B cell (primary cell): ENCODE measurements at regions of chr22 and their contacts with region 1.

Region 1: DNA sequence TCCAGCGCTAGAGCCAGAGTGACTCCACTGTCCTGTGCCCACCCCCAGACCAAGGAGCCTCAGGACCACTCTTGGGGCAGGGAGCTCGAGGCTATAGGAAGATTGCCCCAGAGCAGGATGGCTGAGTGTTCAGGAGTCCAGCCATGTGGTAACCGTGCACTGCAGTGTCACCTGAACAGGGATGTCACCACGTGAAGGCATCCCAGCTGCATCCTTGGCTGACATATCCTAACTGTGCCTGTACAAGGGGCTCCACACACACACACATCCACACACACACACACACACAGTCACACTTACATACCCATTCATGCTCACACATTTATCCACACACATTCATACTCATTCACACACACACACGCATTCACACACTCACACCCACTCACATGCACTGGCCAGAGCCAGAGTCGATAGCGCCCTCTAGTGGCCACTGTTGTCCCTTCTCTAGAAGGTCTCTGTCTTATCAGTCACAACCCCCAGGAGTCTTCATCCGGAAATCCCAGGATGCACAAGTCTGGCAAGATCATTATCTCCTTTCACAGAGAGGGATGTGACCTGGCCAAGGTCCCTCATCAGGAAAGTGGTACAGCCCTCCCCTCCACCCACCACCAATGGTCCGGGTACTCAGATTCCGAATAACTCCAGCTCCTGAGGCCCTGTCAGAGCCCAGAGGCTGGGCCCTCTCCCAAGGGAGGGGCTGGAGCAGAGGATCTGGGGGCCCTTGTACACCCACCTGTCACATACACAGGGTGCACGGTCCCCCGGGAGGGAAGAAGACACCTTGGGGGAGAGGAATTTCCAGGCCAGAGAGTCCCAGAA is 55.1 kb downstream of the IGLL5 start:
- DNase-seq: peak; percentile 89
- ATAC-seq: peak; percentile 66
- H3K4me3 ChIP-seq: peak overlapping the region in 1 of 5 experiments; percentile 5
- H3K4me3 Mint-ChIP-seq: peak overlapping the region; percentile 51
- H3K27ac ChIP-seq: peak overlapping the region; percentile 66 to 79
- H3K27ac Mint-ChIP-seq: peak overlapping the region; percentile 83
- H3K4me1 ChIP-seq: peaks cover 92 to 96% of the 10 kb centered on the region in 2 donors
- H3K4me1 Mint-ChIP-seq: peaks cover 86% of the 10 kb centered on the region
- H3K27me3 ChIP-seq: no peaks in the 10 kb centered on the region
- H3K27me3 Mint-ChIP-seq: no peaks in the 10 kb centered on the region
- CTCF ChIP-seq: peak; percentile 83

Region 2: GRCh38 chr22:22710719-22711531 is 231.8 kb before region 1 on chr22:
- CTCF ChIA-PET with region 1: interaction called, 11 read pairs
- POLR2A ChIA-PET with region 1: no interaction called
- intact Hi-C with region 1: no loop called
- DNase-seq: peak; percentile 80
- ATAC-seq: peak; percentile 48
- H3K4me3 ChIP-seq: no peak overlapping the region
- H3K4me3 Mint-ChIP-seq: peak overlapping the region; percentile 23
- H3K27ac ChIP-seq: no peak overlapping the region
- H3K27ac Mint-ChIP-seq: peak overlapping the region; percentile 76
- H3K4me1 ChIP-seq: peaks cover 30 to 53% of the 10 kb centered on the region in 2 donors
- H3K4me1 Mint-ChIP-seq: peaks cover 52% of the 10 kb centered on the region
- H3K27me3 ChIP-seq: peaks cover 0 to 2% (median 0%) of the 10 kb centered on the region in 4 experiments
- H3K27me3 Mint-ChIP-seq: peaks cover 3% of the 10 kb centered on the region
- CTCF ChIP-seq: peak; percentile 89

Region 3: GRCh38 chr22:22810018-22810427 is 132.7 kb before region 1 on chr22:
- CTCF ChIA-PET with region 1: interaction called, 23 read pairs
- POLR2A ChIA-PET with region 1: no interaction called
- intact Hi-C with region 1: no loop called
- DNase-seq: peak; percentile 84
- ATAC-seq: peak; percentile 76
- H3K4me3 ChIP-seq: peak overlapping the region in 1 of 5 experiments; percentile 1
- H3K4me3 Mint-ChIP-seq: no peak overlapping the region
- H3K27ac ChIP-seq: no peak overlapping the region
- H3K27ac Mint-ChIP-seq: no peak overlapping the region
- H3K4me1 ChIP-seq: peaks cover 9 to 26% of the 10 kb centered on the region in 2 donors
- H3K4me1 Mint-ChIP-seq: peaks cover 24% of the 10 kb centered on the region
- H3K27me3 ChIP-seq: peaks cover 0 to 9% (median 0%) of the 10 kb centered on the region in 4 experiments
- H3K27me3 Mint-ChIP-seq: peaks cover 12% of the 10 kb centered on the region
- CTCF ChIP-seq: peak; percentile 91

Region 4: GRCh38 chr22:22855617-22856308 is 87.0 kb before region 1 on chr22:
- CTCF ChIA-PET with region 1: interaction called, 91 read pairs
- POLR2A ChIA-PET with region 1: interaction called, 3 read pairs
- intact Hi-C with region 1: no loop called
- DNase-seq: peak; percentile 72
- ATAC-seq: peak; percentile 74
- H3K4me3 ChIP-seq: no peak overlapping the region
- H3K4me3 Mint-ChIP-seq: peak overlapping the region; percentile 47
- H3K27ac ChIP-seq: no peak overlapping the region
- H3K27ac Mint-ChIP-seq: peak overlapping the region; percentile 71
- H3K4me1 ChIP-seq: peaks cover 35 to 39% of the 10 kb centered on the region in 2 donors
- H3K4me1 Mint-ChIP-seq: peaks cover 34% of the 10 kb centered on the region
- H3K27me3 ChIP-seq: peaks cover 0 to 1% (median 0%) of the 10 kb centered on the region in 4 experiments
- H3K27me3 Mint-ChIP-seq: peaks cover 16% of the 10 kb centered on the region
- CTCF ChIP-seq: peak; percentile 72

Region 5: DNA sequence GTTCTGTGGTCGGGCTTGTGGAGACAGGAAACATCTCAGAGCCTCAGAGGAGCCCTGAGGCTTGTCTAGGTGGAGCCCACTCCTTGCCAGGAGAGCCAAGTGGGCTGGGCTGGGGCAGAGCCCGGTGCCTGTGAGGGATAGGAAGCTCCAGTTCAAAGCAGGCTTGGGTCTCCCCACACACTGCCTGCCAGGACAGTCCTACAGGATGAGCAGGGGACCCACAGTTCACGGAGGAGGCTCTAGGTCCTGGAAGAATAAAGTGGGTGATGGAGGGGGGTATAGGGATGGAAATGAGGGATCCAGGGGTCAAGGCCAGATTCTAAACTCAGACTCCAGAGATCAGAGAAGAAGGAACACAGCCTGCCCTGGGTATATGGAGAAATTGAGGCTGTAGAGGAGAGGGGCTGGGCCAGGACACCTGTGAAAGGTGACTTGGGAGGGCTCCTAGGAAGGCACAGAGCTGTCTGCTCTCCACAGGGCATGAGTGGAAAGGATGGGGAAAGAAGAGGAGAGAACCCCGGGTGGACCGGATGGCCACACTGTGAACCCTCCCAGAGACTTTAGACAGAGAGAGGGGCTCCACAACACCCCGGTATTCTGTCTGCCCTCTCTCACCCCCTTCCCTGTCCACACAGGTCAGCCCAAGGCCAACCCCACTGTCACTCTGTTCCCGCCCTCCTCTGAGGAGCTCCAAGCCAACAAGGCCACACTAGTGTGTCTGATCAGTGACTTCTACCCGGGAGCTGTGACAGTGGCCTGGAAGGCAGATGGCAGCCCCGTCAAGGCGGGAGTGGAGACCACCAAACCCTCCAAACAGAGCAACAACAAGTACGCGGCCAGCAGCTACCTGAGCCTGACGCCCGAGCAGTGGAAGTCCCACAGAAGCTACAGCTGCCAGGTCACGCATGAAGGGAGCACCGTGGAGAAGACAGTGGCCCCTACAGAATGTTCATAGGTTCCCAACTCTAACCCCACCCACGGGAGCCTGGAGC is 47.7 kb before region 1 on chr22:
- CTCF ChIA-PET with region 1: no interaction called
- POLR2A ChIA-PET with region 1: interaction called, 12 read pairs
- intact Hi-C with region 1: no loop called
- DNase-seq: no peak
- ATAC-seq: peak; percentile 26
- H3K4me3 ChIP-seq: peak overlapping the region; percentile 17 to 75 (median 52)
- H3K4me3 Mint-ChIP-seq: peak overlapping the region; percentile 65
- H3K27ac ChIP-seq: peak overlapping the region; percentile 57 to 61
- H3K27ac Mint-ChIP-seq: peak overlapping the region; percentile 84
- H3K4me1 ChIP-seq: peaks cover 64 to 80% of the 10 kb centered on the region in 2 donors
- H3K4me1 Mint-ChIP-seq: peaks cover 77% of the 10 kb centered on the region
- H3K27me3 ChIP-seq: peaks cover 0 to 8% (median 1%) of the 10 kb centered on the region in 4 experiments
- H3K27me3 Mint-ChIP-seq: peaks cover 22% of the 10 kb centered on the region
- CTCF ChIP-seq: no peak

Region 6: DNA sequence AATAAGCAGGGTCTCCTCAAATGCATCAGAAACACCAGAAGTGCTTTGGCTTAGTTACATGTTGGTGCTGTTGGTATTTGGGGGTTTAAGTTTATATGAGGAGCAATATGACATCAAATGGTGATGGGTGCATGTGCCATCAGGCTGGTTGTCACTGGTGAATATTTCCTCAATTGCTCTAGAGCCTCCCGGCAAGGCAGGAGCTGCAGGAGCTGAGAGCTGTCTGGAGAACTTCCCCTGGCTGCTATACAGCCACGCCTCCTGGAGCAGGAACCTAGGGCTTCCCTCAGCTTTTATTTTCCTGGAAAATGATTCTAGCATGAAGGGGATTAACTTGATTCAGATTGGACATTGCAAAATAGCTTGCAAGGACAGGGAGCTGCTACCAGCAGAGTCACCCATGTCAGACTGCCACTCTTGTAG is 39.4 kb before region 1 on chr22:
- CTCF ChIA-PET with region 1: interaction called, 38 read pairs
- POLR2A ChIA-PET with region 1: interaction called, 14 read pairs
- intact Hi-C with region 1: no loop called
- DNase-seq: no peak
- ATAC-seq: no peak
- H3K4me3 ChIP-seq: peak overlapping the region in 1 of 5 experiments; percentile 18
- H3K4me3 Mint-ChIP-seq: peak overlapping the region; percentile 69
- H3K27ac ChIP-seq: peak overlapping the region; percentile 52 to 53
- H3K27ac Mint-ChIP-seq: peak overlapping the region; percentile 61
- H3K4me1 ChIP-seq: peaks cover 43 to 77% of the 10 kb centered on the region in 2 donors
- H3K4me1 Mint-ChIP-seq: peaks cover 69% of the 10 kb centered on the region
- H3K27me3 ChIP-seq: no peaks in the 10 kb centered on the region
- H3K27me3 Mint-ChIP-seq: no peaks in the 10 kb centered on the region
- CTCF ChIP-seq: no peak

Region 7: DNA sequence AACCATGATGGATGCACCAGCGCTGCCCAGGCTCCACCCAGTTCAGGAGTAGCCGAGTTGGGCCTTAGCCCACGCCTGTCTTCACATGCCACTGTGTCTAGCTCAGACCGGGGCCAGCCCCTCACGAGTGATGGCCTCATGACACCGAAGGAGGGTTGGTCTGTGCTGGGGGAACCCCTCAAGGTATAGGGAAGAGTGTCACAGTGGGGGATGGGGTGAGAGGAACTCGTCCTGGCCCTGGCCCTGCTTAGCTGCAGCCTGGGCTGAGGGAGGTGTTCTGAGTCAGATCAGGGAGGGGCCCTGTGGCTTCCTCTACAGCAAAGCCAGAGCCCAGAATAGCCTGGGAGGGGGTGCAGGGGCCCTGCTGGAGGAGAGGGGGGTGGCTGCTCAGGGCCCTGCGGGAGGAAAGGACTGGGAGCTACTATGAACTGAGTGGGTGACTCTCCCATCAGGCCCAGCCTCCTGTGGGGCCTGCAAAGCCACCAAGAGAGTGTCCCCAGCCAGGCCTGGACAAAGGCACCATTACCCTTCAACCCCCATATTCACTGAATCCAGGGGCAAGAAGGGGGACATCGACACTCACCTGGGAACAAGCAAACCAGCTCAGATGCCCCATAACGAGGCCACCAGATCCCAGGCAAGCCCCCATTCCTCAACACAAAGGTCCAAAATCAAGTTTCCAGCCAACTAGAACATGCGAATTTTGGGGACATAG is 13.9 kb before region 1 on chr22:
- CTCF ChIA-PET with region 1: interaction called, 63 read pairs
- POLR2A ChIA-PET with region 1: interaction called, 15 read pairs
- intact Hi-C with region 1: no loop called
- DNase-seq: peak; percentile 97
- ATAC-seq: peak; percentile 90
- H3K4me3 ChIP-seq: peak overlapping the region in 2 of 5 experiments; percentile 3 to 44
- H3K4me3 Mint-ChIP-seq: peak overlapping the region; percentile 79
- H3K27ac ChIP-seq: peak overlapping the region; percentile 94 to 99
- H3K27ac Mint-ChIP-seq: peak overlapping the region; percentile 95
- H3K4me1 ChIP-seq: peaks cover 98 to 100% of the 10 kb centered on the region in 2 donors
- H3K4me1 Mint-ChIP-seq: peaks cover 98% of the 10 kb centered on the region
- H3K27me3 ChIP-seq: no peaks in the 10 kb centered on the region
- H3K27me3 Mint-ChIP-seq: no peaks in the 10 kb centered on the region
- CTCF ChIP-seq: no peak

Region 8: DNA sequence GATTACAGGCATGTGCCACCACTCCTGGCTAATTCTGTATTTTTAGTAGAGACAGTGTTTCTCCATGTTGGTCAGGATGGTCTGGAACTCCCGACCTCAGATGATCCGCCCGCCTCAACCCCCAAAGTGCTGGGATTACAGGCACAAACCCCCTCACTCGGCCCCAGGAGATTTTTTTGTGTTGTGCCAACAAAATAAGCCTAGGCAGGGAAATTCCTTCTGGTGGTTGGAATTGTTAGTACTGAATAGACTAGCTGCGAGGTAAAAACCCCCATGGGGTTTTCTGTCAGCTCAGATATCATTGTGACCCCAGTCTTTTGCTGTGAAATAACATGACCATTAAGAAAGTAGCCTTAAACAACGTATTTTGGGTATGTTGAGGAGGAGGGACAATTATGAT is 382.5 kb after region 1 on chr22:
- CTCF ChIA-PET with region 1: no interaction called
- POLR2A ChIA-PET with region 1: no interaction called
- intact Hi-C with region 1: no loop called
- DNase-seq: no peak
- ATAC-seq: no peak
- H3K4me3 ChIP-seq: no peak overlapping the region
- H3K4me3 Mint-ChIP-seq: no peak overlapping the region
- H3K27ac ChIP-seq: no peak overlapping the region
- H3K27ac Mint-ChIP-seq: no peak overlapping the region
- H3K4me1 ChIP-seq: no peaks in the 10 kb centered on the region
- H3K4me1 Mint-ChIP-seq: no peaks in the 10 kb centered on the region
- H3K27me3 ChIP-seq: no peaks in the 10 kb centered on the region
- H3K27me3 Mint-ChIP-seq: no peaks in the 10 kb centered on the region
- CTCF ChIP-seq: no peak